PC-9 (cell line): ENCODE measurements at regions of chrX and their contacts with region 1.

Region 1: GRCh38 chrX:19739683-19740082 is 147.7 kb downstream of the SH3KBP1 start:
- DNase-seq: peak in 1 of 2 experiments; percentile 61
- H3K4me3 ChIP-seq: no peak overlapping the region
- H3K27ac ChIP-seq: no peak overlapping the region
- H3K4me1 ChIP-seq: peaks cover 9% of the 10 kb centered on the region; the same call in 1 of the 2 replicates
- H3K27me3 ChIP-seq: no peaks in the 10 kb centered on the region
- CTCF ChIP-seq: peak; percentile 75

Region 2: DNA sequence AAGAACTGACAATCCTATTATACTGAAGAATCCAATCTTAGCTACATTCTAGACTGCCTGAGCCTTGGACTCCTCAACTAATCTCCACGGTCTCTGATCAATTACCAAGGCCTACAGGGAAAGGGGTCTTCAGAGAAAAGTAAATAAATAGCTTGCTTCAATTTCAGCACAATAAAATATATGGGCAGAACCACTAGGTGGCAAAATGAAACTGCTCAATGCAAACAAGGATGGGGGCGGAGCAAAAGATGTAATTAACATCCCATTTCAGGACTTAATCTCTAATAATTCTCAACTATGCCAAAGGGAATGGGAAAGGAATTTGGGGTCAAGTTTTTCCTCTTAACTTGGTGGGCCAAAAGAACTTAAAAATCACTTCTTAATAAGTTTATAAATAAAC is 146.0 kb before region 1 on chrX:
- CTCF ChIA-PET with region 1: no interaction called
- POLR2A ChIA-PET with region 1: no interaction called
- intact Hi-C with region 1: loop called (anchors 5 kb)
- DNase-seq: peak in 1 of 2 experiments; percentile 11
- H3K4me3 ChIP-seq: no peak overlapping the region
- H3K27ac ChIP-seq: peak overlapping the region; percentile 39; the same call in 1 of the 2 replicates
- H3K4me1 ChIP-seq: no peaks in the 10 kb centered on the region
- H3K27me3 ChIP-seq: no peaks in the 10 kb centered on the region
- CTCF ChIP-seq: peak; percentile 71

Region 3: GRCh38 chrX:19772826-19773628 is 33.3 kb after region 1 on chrX:
- CTCF ChIA-PET with region 1: no interaction called
- POLR2A ChIA-PET with region 1: no interaction called
- intact Hi-C with region 1: no loop called
- DNase-seq: no peak
- H3K4me3 ChIP-seq: no peak overlapping the region
- H3K27ac ChIP-seq: no peak overlapping the region
- H3K4me1 ChIP-seq: no peaks in the 10 kb centered on the region
- H3K27me3 ChIP-seq: no peaks in the 10 kb centered on the region
- CTCF ChIP-seq: no peak